Psoas muscle (tissue), 8 donors: ENCODE measurements at regions of chr2 and their contacts with region 1.

Region 1: GRCh38 chr2:203804070-203804469 is 63.5 kb upstream of the CTLA4 start:
- DNase-seq: no peak
- ATAC-seq: peak in 3 of 4 donors; percentile 36 to 57 (median 43)
- H3K4me3 ChIP-seq: no peak overlapping the region
- H3K27ac ChIP-seq: peak overlapping the region; percentile 25
- H3K4me1 ChIP-seq: peaks cover 5% of the 10 kb centered on the region
- H3K27me3 ChIP-seq: no peaks in the 10 kb centered on the region
- CTCF ChIP-seq: no peak

Region 2: GRCh38 chr2:203743441-203743981 is 60.6 kb before region 1 on chr2:
- intact Hi-C with region 1: loop called in 1 of 2 experiments (anchors 2 kb)
- DNase-seq: peak; percentile 58 to 74
- ATAC-seq: peak; percentile 91 to 96 (median 94)
- H3K4me3 ChIP-seq: no peak overlapping the region
- H3K27ac ChIP-seq: peak overlapping the region; percentile 74
- H3K4me1 ChIP-seq: peaks cover 13% of the 10 kb centered on the region
- H3K27me3 ChIP-seq: no peaks in the 10 kb centered on the region
- CTCF ChIP-seq: no peak

Region 3: DNA sequence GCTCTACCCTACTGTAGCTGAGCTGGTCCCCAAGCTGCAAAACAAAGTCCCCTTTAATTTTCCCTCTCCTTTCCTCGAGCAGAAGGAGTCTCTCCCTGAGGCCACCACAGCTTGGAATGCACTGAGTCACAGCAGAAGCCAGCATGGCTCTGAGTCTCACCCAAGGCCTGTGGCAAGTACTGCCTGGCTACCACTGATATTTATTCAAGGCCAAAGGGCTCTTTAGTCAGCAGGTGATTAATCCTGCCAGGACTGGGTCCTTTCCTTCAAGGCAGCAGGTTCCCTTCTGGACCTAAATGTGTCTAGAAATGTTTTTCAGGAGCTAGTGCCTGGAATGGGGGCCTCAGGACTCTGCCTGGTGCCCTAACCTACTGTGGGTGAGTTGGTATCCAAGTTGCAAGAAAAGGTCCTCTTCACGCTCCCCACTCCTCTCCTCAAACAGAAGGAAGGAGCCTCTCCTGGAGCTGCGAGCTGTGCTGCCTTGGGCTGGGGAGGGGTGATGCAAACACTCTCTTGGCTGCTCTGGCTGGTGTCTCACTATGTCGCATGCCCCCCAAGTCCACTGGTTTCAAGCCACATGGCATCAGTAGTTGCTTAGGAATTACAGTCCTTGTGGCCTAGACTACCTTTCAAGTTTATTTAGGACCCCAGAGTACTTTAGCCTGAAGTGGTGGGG is 44.2 kb before region 1 on chr2:
- intact Hi-C with region 1: loop called in 1 of 2 experiments (anchors 5 kb)
- DNase-seq: peak in 1 of 2 donors; percentile 22
- ATAC-seq: peak; percentile 80 to 91 (median 84)
- H3K4me3 ChIP-seq: no peak overlapping the region
- H3K27ac ChIP-seq: peak overlapping the region; percentile 78
- H3K4me1 ChIP-seq: peaks cover 4% of the 10 kb centered on the region
- H3K27me3 ChIP-seq: no peaks in the 10 kb centered on the region
- CTCF ChIP-seq: no peak

Region 4: DNA sequence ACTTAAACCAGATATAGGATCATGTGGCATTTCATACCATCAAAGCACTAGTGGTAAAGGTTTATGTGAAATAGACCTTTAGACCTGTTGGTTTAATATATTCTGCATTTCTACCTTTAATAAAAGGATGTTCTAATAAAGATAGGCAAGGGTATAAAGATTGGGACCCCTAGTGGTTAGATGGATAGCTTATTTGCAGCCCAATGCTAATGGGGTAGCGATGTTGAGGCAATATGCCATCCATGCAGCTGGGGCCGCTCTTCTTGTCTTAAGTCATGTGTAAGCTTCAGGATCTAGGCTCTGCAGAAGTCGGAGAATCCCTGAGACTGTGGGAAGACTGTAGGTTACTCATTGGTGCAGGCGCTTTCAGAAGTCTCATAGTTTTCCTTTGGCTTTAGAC is 247.4 kb after region 1 on chr2:
- intact Hi-C with region 1: no loop called
- DNase-seq: no peak
- ATAC-seq: no peak
- H3K4me3 ChIP-seq: no peak overlapping the region
- H3K27ac ChIP-seq: no peak overlapping the region
- H3K4me1 ChIP-seq: no peaks in the 10 kb centered on the region
- H3K27me3 ChIP-seq: peaks cover 0 to 4% (median 1%) of the 10 kb centered on the region in 3 donors
- CTCF ChIP-seq: no peak